B cell (primary cell): ENCODE measurements at regions of chr7 and their contacts with region 1.

Region 1: GRCh38 chr7:100852048-100852872 is at the start of gene SLC12A9:
- DNase-seq: peak; percentile 91
- ATAC-seq: peak; percentile 90
- H3K4me3 ChIP-seq: peak within 1 kb of the TSS; percentile 55 to 87 (median 71)
- H3K4me3 Mint-ChIP-seq: peak within 1 kb of the TSS; percentile 95
- H3K27ac ChIP-seq: peak within 1 kb of the TSS; percentile 47 to 65
- H3K27ac Mint-ChIP-seq: peak within 1 kb of the TSS; percentile 93
- H3K4me1 ChIP-seq: peaks cover 11 to 23% of the 10 kb centered on the region in 2 donors
- H3K4me1 Mint-ChIP-seq: peaks cover 24% of the 10 kb centered on the region
- H3K27me3 ChIP-seq: no peaks in the 10 kb centered on the region
- H3K27me3 Mint-ChIP-seq: no peaks in the 10 kb centered on the region
- CTCF ChIP-seq: peak; percentile 96
- total RNA-seq, gene SLC12A9: 77.4 and 80.1 TPM in 2 replicates

Region 2: DNA sequence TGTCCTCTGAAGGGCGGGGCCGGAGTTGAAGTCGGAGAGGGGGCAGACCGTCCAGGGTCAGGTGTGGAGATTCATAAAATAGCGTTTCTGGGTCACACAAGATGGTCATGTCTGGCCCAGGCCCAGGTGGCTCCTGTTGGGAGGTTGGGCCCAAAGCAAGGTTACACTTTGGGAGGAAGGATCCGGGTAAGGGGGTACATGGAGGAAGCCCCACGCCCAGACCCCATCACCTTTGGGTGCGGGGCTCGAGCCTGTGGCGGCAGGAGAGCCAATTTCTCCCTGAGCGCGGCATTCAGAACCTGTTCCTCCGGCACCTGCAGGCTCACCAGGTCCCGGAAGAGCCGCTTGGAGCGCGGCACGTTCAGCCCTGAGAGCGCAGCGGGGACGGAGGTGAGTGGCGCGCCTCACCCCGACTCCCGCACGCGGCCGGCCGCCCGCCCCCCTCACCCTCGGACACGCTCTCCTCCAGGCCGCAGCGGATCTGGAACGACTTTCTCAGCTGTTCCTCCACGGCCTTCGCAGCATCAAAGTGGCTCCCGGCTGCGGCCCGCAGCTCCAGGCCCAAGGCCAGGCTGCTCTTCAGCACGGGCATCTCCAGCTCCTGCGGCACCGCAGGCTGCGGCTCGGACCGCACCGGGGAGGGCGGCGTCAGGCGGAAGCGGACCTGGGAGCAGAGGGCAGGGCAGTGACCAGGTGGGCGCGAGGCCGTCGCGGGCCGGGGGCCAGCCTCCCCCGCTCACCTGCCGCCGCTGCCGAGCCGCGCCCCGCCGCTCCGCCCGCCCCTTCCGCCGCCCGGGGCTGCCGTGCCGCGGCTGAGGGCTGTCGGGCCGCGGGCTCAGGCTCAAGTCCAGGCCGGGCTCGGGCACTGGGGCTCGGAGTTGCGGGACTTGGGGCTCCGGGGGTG is 416.6 kb before region 1 on chr7:
- CTCF ChIA-PET with region 1: no interaction called
- POLR2A ChIA-PET with region 1: no interaction called
- intact Hi-C with region 1: loop called (anchors 1 kb)
- DNase-seq: peak; percentile 81
- ATAC-seq: peak; percentile 28
- H3K4me3 ChIP-seq: peak overlapping the region; percentile 39 to 96 (median 81)
- H3K4me3 Mint-ChIP-seq: peak overlapping the region; percentile 98
- H3K27ac ChIP-seq: peak overlapping the region; percentile 87 to 91
- H3K27ac Mint-ChIP-seq: peak overlapping the region; percentile 99
- H3K4me1 ChIP-seq: peaks cover 26 to 46% of the 10 kb centered on the region in 2 donors
- H3K4me1 Mint-ChIP-seq: peaks cover 50% of the 10 kb centered on the region
- H3K27me3 ChIP-seq: no peaks in the 10 kb centered on the region
- H3K27me3 Mint-ChIP-seq: no peaks in the 10 kb centered on the region
- CTCF ChIP-seq: no peak

Region 3: DNA sequence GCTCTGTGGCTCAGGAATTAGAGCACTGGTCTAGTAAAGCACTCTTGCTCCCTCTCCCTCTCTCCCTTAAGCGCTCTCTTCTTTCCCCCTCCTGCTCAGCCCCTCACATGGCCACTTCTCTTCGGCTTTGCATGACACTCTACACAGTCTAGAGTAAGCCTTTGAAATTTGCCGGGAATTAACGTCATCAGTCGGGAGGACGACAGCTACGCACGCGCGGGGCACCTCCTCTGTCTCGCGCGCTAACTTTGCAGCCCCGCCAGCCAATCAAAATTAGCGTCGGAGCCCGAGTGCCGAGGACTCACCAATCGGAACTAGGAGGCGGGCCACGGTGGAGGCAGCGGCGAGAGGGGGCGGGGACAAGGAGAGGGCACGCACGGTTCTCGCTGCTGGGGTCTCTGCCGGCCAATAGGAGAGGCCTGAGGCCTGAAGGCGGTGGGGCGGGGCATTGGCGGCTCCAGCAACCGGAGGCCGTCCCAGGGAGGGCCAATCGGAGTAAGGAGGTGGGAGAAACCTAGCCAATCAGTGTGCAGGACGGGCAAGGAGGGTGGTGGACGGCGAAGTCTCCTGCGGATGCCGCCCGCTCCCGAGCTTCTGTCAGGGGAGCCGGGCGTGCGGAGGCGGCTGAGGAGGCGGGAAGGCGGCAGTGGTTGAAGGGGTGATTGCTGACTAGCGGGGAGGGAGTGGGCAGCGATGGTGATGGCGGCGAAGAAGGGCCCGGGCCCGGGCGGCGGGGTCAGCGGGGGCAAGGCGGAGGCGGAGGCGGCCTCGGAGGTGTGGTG is 313.4 kb before region 1 on chr7 and contains the start of gene AGFG2:
- CTCF ChIA-PET with region 1: no interaction called
- POLR2A ChIA-PET with region 1: no interaction called
- intact Hi-C with region 1: loop called (anchors 2 kb)
- DNase-seq: peak; percentile 100
- ATAC-seq: peak; percentile 97
- H3K4me3 ChIP-seq: peak within 1 kb of the TSS; percentile 62 to 84 (median 72)
- H3K4me3 Mint-ChIP-seq: peak within 1 kb of the TSS; percentile 91
- H3K27ac ChIP-seq: peak within 1 kb of the TSS in 1 of 2 donors; percentile 42
- H3K27ac Mint-ChIP-seq: peak within 1 kb of the TSS; percentile 76
- H3K4me1 ChIP-seq: peaks cover 14 to 23% of the 10 kb centered on the region in 2 donors
- H3K4me1 Mint-ChIP-seq: peaks cover 36% of the 10 kb centered on the region
- H3K27me3 ChIP-seq: no peaks in the 10 kb centered on the region
- H3K27me3 Mint-ChIP-seq: no peaks in the 10 kb centered on the region
- CTCF ChIP-seq: no peak
- total RNA-seq, gene AGFG2: 11.0 and 11.6 TPM in 2 replicates

Region 4: DNA sequence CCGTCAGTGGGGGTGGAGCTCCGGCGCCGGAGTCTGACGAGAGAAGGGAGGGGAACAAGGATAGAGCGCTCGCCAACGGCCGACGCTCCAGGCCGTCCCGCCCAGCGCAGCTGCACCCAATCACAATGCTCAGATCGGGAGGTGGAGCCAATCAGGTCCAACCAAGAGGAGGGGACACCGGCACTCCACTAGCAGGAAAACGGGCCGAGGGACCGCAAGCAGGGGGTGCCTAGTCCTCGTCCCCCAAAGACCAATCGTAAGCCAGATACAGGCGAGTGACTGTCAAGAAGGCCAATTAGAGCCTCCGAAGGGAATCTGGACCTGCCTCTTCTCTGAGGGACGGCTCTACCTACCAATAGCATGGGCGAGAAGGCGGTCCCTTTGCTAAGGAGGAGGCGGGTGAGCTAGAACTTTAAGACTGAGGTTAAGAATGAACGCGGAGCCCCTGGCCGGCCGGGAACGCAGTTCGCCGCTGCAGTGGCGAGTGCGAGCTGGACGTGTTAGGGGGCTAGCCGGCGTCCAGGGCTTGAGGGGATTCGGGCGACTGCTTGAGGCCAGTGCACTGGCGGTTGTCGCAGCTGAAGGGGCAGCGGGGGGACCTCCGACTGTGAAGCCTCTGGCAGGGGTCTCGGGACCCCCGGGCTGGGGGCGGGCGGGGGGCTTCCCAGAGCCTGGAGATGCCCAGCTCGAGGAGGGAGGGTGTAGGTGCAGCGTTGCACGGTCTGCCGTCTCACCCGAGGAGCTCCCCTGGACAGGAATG is 265.8 kb before region 1 on chr7 and contains the start of gene FBXO24:
- CTCF ChIA-PET with region 1: interaction called, 10 read pairs
- POLR2A ChIA-PET with region 1: interaction called, 3 read pairs
- intact Hi-C with region 1: loop called (anchors 1 kb)
- DNase-seq: peak; percentile 100
- ATAC-seq: peak; percentile 79
- H3K4me3 ChIP-seq: peak within 1 kb of the TSS; percentile 82 to 93 (median 85)
- H3K4me3 Mint-ChIP-seq: peak within 1 kb of the TSS; percentile 98
- H3K27ac ChIP-seq: peak within 1 kb of the TSS; percentile 94 to 97
- H3K27ac Mint-ChIP-seq: peak within 1 kb of the TSS; percentile 99
- H3K4me1 ChIP-seq: peaks cover 27 to 38% of the 10 kb centered on the region in 2 donors
- H3K4me1 Mint-ChIP-seq: peaks cover 44% of the 10 kb centered on the region
- H3K27me3 ChIP-seq: peaks cover 0 to 14% (median 5%) of the 10 kb centered on the region in 4 experiments
- H3K27me3 Mint-ChIP-seq: peaks cover 9% of the 10 kb centered on the region
- CTCF ChIP-seq: no peak
- total RNA-seq, gene FBXO24: 1.6 and 2.2 TPM in 2 replicates

Region 5: GRCh38 chr7:100673300-100673941 is 178.8 kb before region 1 on chr7 and contains the start of gene GNB2:
- CTCF ChIA-PET with region 1: no interaction called
- POLR2A ChIA-PET with region 1: interaction called, 4 read pairs
- intact Hi-C with region 1: loop called (anchors 1 kb)
- DNase-seq: peak; percentile 99
- ATAC-seq: peak; percentile 65
- H3K4me3 ChIP-seq: peak within 1 kb of the TSS; percentile 53 to 99 (median 98)
- H3K4me3 Mint-ChIP-seq: peak within 1 kb of the TSS; percentile 96
- H3K27ac ChIP-seq: peak within 1 kb of the TSS; percentile 89 to 97
- H3K27ac Mint-ChIP-seq: peak within 1 kb of the TSS; percentile 97
- H3K4me1 ChIP-seq: peaks cover 0 to 6% of the 10 kb centered on the region in 2 donors
- H3K4me1 Mint-ChIP-seq: peaks cover 8% of the 10 kb centered on the region
- H3K27me3 ChIP-seq: no peaks in the 10 kb centered on the region
- H3K27me3 Mint-ChIP-seq: no peaks in the 10 kb centered on the region
- CTCF ChIP-seq: no peak
- total RNA-seq, gene GNB2: 127 TPM in 2 replicates

Region 6: GRCh38 chr7:100803398-100804233 is 48.6 kb before region 1 on chr7:
- CTCF ChIA-PET with region 1: interaction called, 111 read pairs
- POLR2A ChIA-PET with region 1: interaction called, 5 read pairs
- intact Hi-C with region 1: loop called (anchors 1 kb)
- DNase-seq: peak; percentile 90
- ATAC-seq: peak; percentile 98
- H3K4me3 ChIP-seq: peak overlapping the region in 4 of 5 experiments; percentile 54 to 65 (median 56)
- H3K4me3 Mint-ChIP-seq: peak overlapping the region; percentile 86
- H3K27ac ChIP-seq: peak overlapping the region; percentile 84 to 94
- H3K27ac Mint-ChIP-seq: peak overlapping the region; percentile 86
- H3K4me1 ChIP-seq: peaks cover 28 to 35% of the 10 kb centered on the region in 2 donors
- H3K4me1 Mint-ChIP-seq: peaks cover 38% of the 10 kb centered on the region
- H3K27me3 ChIP-seq: no peaks in the 10 kb centered on the region
- H3K27me3 Mint-ChIP-seq: no peaks in the 10 kb centered on the region
- CTCF ChIP-seq: no peak

Region 7: DNA sequence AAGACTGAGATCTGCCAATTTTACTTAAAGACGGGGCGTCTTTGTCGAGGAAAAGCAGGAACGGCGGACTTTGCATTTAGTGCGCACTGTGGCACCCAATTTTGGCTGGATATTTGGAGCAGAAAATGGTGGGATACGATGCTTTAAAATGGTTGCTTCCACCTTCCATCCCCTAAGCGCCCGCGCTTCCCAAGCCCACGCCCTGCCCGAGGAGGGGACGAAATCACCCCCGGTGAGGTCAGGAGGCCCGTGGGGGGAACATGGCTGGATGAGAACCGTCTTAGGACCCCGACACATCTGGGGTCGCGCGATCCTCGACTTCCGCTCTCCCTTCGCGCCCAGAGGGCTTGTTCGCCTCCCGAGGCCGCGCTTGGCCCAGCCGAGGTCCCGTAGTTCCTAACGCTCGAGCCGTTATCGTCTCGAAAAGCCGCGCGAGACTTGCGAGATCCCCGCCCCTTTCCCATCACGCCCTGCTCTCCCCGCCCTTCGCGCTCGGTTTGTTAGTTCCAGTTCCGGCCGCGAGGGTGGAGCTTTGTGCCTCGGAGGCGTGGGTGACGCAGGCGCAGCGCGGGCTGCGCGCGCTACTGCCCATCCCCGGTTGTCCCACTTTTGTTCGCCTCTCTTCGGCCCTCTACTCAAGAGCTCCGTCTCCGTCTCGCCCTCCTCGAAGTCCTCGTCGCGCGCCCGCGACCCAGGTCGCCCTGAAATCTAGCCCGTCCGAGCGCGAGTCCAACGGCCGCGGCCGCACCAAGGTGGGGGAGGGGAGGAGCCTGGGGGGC is 22.5 kb after region 1 on chr7 and contains the start of gene SRRT:
- CTCF ChIA-PET with region 1: interaction called, 36 read pairs
- POLR2A ChIA-PET with region 1: interaction called, 12 read pairs
- intact Hi-C with region 1: loop called (anchors 1 kb)
- DNase-seq: peak; percentile 99
- ATAC-seq: peak; percentile 96
- H3K4me3 ChIP-seq: peak within 1 kb of the TSS; percentile 73 to 99 (median 89)
- H3K4me3 Mint-ChIP-seq: peak within 1 kb of the TSS; percentile 97
- H3K27ac ChIP-seq: peak within 1 kb of the TSS; percentile 91 to 96
- H3K27ac Mint-ChIP-seq: peak within 1 kb of the TSS; percentile 95
- H3K4me1 ChIP-seq: peaks cover 22 to 32% of the 10 kb centered on the region in 2 donors
- H3K4me1 Mint-ChIP-seq: peaks cover 37% of the 10 kb centered on the region
- H3K27me3 ChIP-seq: no peaks in the 10 kb centered on the region
- H3K27me3 Mint-ChIP-seq: no peaks in the 10 kb centered on the region
- CTCF ChIP-seq: no peak
- total RNA-seq, gene SRRT: 209 and 224 TPM in 2 replicates